SK-N-SH (cell line): ENCODE measurements at regions of chr5 and their contacts with region 1.

Region 1: DNA sequence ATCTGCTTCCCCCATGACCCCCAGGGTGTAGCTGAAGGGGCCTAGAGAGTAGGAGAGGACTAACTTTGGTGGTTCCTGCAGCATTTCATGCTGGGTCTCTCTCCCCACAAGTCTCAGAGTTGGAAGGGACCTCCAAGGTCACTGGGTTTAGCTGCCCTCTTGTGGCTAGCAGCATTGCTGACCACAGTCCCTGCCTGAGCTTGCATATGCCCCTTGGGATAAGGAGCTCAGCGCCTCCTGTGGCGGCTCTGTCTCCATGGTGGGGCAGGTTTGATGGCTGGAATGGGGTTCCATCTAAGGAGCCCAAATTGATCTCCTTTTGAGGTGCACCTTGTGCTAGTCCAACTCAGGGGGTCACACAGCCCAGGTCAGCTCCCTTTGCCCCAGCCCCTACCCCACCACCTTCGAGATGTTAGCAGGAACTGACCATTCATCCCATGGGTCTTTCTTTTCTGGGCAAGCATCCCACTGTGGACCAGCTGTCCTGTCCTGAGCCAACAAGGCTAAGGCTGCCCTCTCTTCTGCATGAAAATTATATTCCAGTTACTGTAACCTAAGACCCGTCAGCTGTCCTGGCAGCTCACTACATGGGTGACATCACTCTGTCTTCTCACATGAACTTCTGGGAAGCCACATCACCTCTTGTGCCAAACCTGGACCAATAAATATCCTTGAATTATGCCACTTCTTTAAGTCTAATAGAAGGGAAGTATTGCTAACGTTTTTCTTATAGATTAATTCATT is 196.2 kb downstream of the HSPA4 start:
- DNase-seq: peak; percentile 73
- H3K4me3 ChIP-seq: no peak overlapping the region
- H3K27ac ChIP-seq: no peak overlapping the region
- H3K4me1 ChIP-seq: peaks cover 0 to 26% of the 10 kb centered on the region in 2 experiments; a peak in 1 of 4 replicates
- H3K27me3 ChIP-seq: no peaks in the 10 kb centered on the region
- CTCF ChIP-seq: peak; percentile 61
- EP300 ChIP-seq: no peak
- RAD21 ChIP-seq: peak; percentile 76

Region 2: GRCh38 chr5:133260715-133261114 is 12.7 kb after region 1 on chr5:
- CTCF ChIA-PET with region 1: interaction called, 14 read pairs
- POLR2A ChIA-PET with region 1: no interaction called
- DNase-seq: no peak
- H3K4me3 ChIP-seq: no peak overlapping the region
- H3K27ac ChIP-seq: no peak overlapping the region
- H3K4me1 ChIP-seq: no peaks in the 10 kb centered on the region
- H3K27me3 ChIP-seq: peaks cover 12% of the 10 kb centered on the region; the same call in 1 of the 2 replicates
- CTCF ChIP-seq: peak; percentile 27; the same call in 1 of the 2 replicates
- EP300 ChIP-seq: no peak
- RAD21 ChIP-seq: peak; percentile 49